CD4-positive, alpha-beta memory T cell (primary cell): ENCODE measurements at regions of chr19 and their contacts with region 1.

Region 1: DNA sequence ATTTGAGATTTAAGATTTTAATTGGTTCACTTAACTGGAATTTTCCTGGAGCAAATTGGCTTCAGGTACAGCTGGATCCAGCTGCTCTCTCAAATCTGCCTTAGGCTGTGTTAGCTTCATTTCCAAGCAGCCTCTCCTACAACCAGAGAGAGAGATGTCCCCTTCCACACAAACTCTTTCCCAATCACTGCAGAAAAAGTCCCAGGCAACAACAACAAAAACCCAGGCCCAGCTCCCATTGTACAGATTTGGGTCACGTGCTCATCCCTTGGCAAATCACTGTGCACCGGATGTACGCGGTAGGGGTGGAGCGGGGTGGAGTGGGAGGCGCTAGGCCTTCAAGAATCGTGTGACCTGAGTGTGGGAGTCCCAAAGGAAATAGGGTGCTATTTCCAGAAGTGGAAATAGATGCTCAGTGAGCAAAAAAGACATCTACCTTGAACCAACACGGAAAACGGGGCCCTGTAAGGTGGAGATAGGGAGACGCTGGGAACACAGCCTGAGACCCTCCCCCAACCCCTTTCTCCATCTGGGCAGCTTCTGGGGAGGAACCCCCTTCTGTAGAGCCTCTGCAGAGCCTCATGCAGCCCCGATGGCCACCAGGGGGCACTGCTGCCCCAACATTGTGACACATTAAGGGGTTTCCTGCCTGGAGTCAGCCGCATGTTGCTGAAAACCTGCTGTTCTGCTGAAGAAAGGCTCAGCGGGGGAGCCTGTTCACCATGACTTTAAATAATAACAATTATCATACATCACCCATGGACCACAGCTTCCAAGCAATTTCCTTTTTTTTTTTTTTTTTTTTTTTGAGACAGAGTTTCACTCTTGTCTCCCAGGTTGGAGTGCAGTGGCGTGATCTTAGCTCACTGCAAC is 25.4 kb downstream of the HPN start:
- DNase-seq: peak; percentile 83 to 85 (median 85)
- H3K4me3 ChIP-seq: no peak overlapping the region
- H3K4me3 Mint-ChIP-seq: no peak overlapping the region
- H3K27ac ChIP-seq: no peak overlapping the region
- H3K27ac Mint-ChIP-seq: peak overlapping the region in 6 of 7 donors; percentile 43 to 83 (median 71)
- H3K4me1 ChIP-seq: peaks cover 6% of the 10 kb centered on the region
- H3K4me1 Mint-ChIP-seq: peaks cover 4 to 10% (median 6%) of the 10 kb centered on the region in 4 donors
- H3K27me3 ChIP-seq: no peaks in the 10 kb centered on the region
- H3K27me3 Mint-ChIP-seq: peaks cover 1 to 2% of the 10 kb centered on the region in 2 donors

Region 2: DNA sequence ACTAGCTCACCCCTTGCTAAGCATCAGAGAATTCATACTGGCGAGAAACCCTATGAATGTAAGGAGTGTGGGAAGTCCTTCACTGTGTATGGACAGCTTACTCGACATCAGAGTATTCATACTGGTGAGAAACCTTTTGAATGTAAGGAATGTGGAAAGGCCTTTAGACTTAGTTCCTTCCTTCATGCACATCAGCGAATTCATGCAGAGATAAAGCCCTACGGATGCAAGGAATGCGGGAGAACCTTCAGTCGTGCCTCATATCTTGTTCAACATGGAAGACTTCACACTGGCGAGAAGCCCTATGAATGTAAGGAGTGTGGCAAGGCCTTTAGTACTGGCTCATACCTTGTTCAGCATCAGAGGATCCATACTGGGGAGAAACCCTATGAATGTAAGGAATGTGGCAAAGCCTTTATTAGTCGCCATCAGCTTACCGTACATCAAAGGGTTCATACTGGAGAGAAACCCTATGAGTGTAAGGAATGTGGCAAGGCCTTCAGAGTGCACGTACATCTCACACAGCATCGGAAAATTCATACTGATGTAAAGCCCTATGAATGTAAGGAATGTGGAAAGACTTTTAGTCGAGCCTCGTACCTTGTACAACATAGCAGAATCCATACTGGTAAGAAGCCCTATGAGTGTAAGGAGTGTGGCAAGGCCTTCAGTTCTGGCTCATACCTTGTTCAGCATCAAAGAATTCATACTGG is 122.9 kb before region 1 on chr19:
- CTCF ChIA-PET with region 1: no interaction called
- POLR2A ChIA-PET with region 1: no interaction called
- intact Hi-C with region 1: no loop called
- DNase-seq: no peak
- H3K4me3 ChIP-seq: no peak overlapping the region
- H3K4me3 Mint-ChIP-seq: no peak overlapping the region
- H3K27ac ChIP-seq: no peak overlapping the region
- H3K27ac Mint-ChIP-seq: no peak overlapping the region
- H3K4me1 ChIP-seq: no peaks in the 10 kb centered on the region
- H3K4me1 Mint-ChIP-seq: peaks cover 0 to 1% (median 0%) of the 10 kb centered on the region in 4 donors
- H3K27me3 ChIP-seq: no peaks in the 10 kb centered on the region
- H3K27me3 Mint-ChIP-seq: no peaks in the 10 kb centered on the region

Region 3: GRCh38 chr19:35023428-35023827 is 43.5 kb before region 1 on chr19:
- CTCF ChIA-PET with region 1: no interaction called
- POLR2A ChIA-PET with region 1: no interaction called
- intact Hi-C with region 1: no loop called
- DNase-seq: peak in 1 of 5 donors; percentile 17
- H3K4me3 ChIP-seq: no peak overlapping the region
- H3K4me3 Mint-ChIP-seq: no peak overlapping the region
- H3K27ac ChIP-seq: no peak overlapping the region
- H3K27ac Mint-ChIP-seq: no peak overlapping the region
- H3K4me1 ChIP-seq: no peaks in the 10 kb centered on the region
- H3K4me1 Mint-ChIP-seq: peaks cover 0 to 4% (median 1%) of the 10 kb centered on the region in 4 donors
- H3K27me3 ChIP-seq: no peaks in the 10 kb centered on the region
- H3K27me3 Mint-ChIP-seq: no peaks in the 10 kb centered on the region

Region 4: GRCh38 chr19:35044317-35045117 is 22.4 kb before region 1 on chr19:
- CTCF ChIA-PET with region 1: interaction called, 17 read pairs
- POLR2A ChIA-PET with region 1: interaction called, 5 read pairs
- intact Hi-C with region 1: no loop called
- DNase-seq: peak in 4 of 5 donors; percentile 45 to 62 (median 50)
- H3K4me3 ChIP-seq: no peak overlapping the region
- H3K4me3 Mint-ChIP-seq: peak overlapping the region in 1 of 8 donors; percentile 81
- H3K27ac ChIP-seq: no peak overlapping the region
- H3K27ac Mint-ChIP-seq: peak overlapping the region in 4 of 7 donors; percentile 51 to 71 (median 64)
- H3K4me1 ChIP-seq: peaks cover 32% of the 10 kb centered on the region
- H3K4me1 Mint-ChIP-seq: peaks cover 20 to 34% (median 26%) of the 10 kb centered on the region in 4 donors
- H3K27me3 ChIP-seq: no peaks in the 10 kb centered on the region
- H3K27me3 Mint-ChIP-seq: peaks cover 6 to 8% of the 10 kb centered on the region in 2 donors

Region 5: GRCh38 chr19:35090506-35091237 is 23.7 kb after region 1 on chr19:
- CTCF ChIA-PET with region 1: interaction called, 17 read pairs
- POLR2A ChIA-PET with region 1: no interaction called
- intact Hi-C with region 1: no loop called
- DNase-seq: peak in 4 of 5 donors; percentile 25 to 43 (median 30)
- H3K4me3 ChIP-seq: no peak overlapping the region
- H3K4me3 Mint-ChIP-seq: peak overlapping the region in 1 of 8 donors; percentile 13
- H3K27ac ChIP-seq: no peak overlapping the region
- H3K27ac Mint-ChIP-seq: no peak overlapping the region
- H3K4me1 ChIP-seq: peaks cover 15% of the 10 kb centered on the region
- H3K4me1 Mint-ChIP-seq: peaks cover 3 to 13% (median 5%) of the 10 kb centered on the region in 4 donors
- H3K27me3 ChIP-seq: no peaks in the 10 kb centered on the region
- H3K27me3 Mint-ChIP-seq: peaks cover 6 to 10% of the 10 kb centered on the region in 2 donors

Region 6: GRCh38 chr19:35352448-35353304 is 285.7 kb after region 1 on chr19:
- CTCF ChIA-PET with region 1: interaction called, 5 read pairs
- POLR2A ChIA-PET with region 1: no interaction called
- intact Hi-C with region 1: loop called (anchors 1 kb)
- DNase-seq: peak; percentile 64 to 76 (median 73)
- H3K4me3 ChIP-seq: no peak overlapping the region
- H3K4me3 Mint-ChIP-seq: peak overlapping the region in 1 of 8 donors; percentile 17
- H3K27ac ChIP-seq: no peak overlapping the region
- H3K27ac Mint-ChIP-seq: peak overlapping the region in 2 of 7 donors; percentile 19 to 77
- H3K4me1 ChIP-seq: peaks cover 22% of the 10 kb centered on the region
- H3K4me1 Mint-ChIP-seq: peaks cover 10 to 18% (median 12%) of the 10 kb centered on the region in 4 donors
- H3K27me3 ChIP-seq: no peaks in the 10 kb centered on the region
- H3K27me3 Mint-ChIP-seq: peaks cover 0 to 8% of the 10 kb centered on the region in 2 donors